Aorta (tissue), 5 donors: ENCODE measurements at regions of chr7 and their contacts with region 1.

Region 1: GRCh38 chr7:116525913-116526861 is 1.4 kb downstream of the CAV1 start:
- DNase-seq: peak; percentile 85 to 91
- ATAC-seq: peak; percentile 92
- H3K4me3 ChIP-seq: peak overlapping the region; percentile 21 to 84
- H3K27ac ChIP-seq: peak overlapping the region; percentile 87 to 90
- H3K4me1 ChIP-seq: no peaks in the 10 kb centered on the region
- H3K27me3 ChIP-seq: no peaks in the 10 kb centered on the region

Region 2: DNA sequence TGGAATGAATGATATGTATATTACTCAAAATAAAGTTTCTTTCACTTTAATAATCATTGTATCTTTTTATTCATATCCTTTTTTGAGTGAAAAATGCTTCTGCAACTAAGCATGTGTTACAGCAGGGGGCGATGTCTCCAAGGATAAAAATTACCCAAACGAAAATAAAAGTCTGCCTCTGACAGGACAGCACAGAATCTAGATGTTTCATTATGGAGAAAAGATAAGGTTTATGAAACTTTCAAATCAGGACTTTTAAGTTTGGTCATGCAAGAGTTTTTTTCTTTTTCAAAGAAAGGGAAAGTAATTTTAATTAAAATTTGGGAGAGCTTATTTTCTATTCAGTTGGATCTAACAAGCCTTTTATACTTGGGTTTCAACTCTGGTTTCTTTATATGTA is 267.5 kb before region 1 on chr7:
- intact Hi-C with region 1: loop called (anchors 2 kb)
- DNase-seq: no peak
- ATAC-seq: peak; percentile 80
- H3K4me3 ChIP-seq: no peak overlapping the region
- H3K27ac ChIP-seq: peak overlapping the region in 1 of 2 donors; percentile 22
- H3K4me1 ChIP-seq: peaks cover 0 to 2% of the 10 kb centered on the region in 2 donors
- H3K27me3 ChIP-seq: no peaks in the 10 kb centered on the region

Region 3: GRCh38 chr7:116354546-116355408 is 171.4 kb before region 1 on chr7:
- intact Hi-C with region 1: loop called (anchors 10 kb)
- DNase-seq: peak; percentile 62 to 81
- ATAC-seq: peak; percentile 82
- H3K4me3 ChIP-seq: peak overlapping the region in 1 of 2 donors; percentile 21
- H3K27ac ChIP-seq: peak overlapping the region; percentile 89 to 90
- H3K4me1 ChIP-seq: peaks cover 7 to 15% of the 10 kb centered on the region in 2 donors
- H3K27me3 ChIP-seq: no peaks in the 10 kb centered on the region

Region 4: DNA sequence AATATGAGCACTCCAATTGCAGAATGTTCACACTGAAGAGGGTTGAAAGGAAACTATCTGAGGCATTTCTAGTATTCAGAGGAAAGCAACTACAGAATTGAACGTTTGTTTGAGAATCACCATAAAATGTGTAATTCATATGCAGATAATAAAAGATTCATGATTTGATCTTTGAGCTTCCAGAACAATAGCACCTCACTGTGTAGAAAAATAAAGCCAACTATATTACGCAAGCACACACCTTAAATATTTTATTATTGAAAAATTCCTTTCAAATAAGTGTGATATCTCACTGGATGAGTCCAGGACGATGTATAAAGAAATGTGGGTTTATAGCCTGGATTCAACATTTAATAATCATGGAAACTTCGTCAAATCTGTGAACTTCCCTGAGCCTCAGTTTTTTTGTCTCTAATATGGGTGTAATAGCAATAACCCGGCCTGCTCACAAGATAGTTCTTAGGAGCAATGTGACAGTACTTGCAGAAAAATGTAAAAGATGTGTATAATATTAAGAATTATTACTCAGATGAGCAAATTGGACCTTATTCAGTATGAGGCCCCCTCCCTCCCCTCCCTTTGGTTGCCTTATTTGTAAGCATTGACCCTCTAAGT is 38.2 kb before region 1 on chr7:
- intact Hi-C with region 1: no loop called
- DNase-seq: no peak
- ATAC-seq: no peak
- H3K4me3 ChIP-seq: no peak overlapping the region
- H3K27ac ChIP-seq: no peak overlapping the region
- H3K4me1 ChIP-seq: no peaks in the 10 kb centered on the region
- H3K27me3 ChIP-seq: no peaks in the 10 kb centered on the region

Region 5: GRCh38 chr7:116499168-116500077 is 26.8 kb before region 1 on chr7 and contains the start of gene CAV2:
- intact Hi-C with region 1: loop called in 1 of 2 experiments (anchors 2 kb)
- DNase-seq: peak; percentile 81 to 93
- ATAC-seq: peak; percentile 91
- H3K4me3 ChIP-seq: peak within 1 kb of the TSS; percentile 60 to 80
- H3K27ac ChIP-seq: peak within 1 kb of the TSS; percentile 20 to 90
- H3K4me1 ChIP-seq: no peaks in the 10 kb centered on the region
- H3K27me3 ChIP-seq: no peaks in the 10 kb centered on the region
- total RNA-seq, gene CAV2: 86.7 to 131 TPM

Region 6: DNA sequence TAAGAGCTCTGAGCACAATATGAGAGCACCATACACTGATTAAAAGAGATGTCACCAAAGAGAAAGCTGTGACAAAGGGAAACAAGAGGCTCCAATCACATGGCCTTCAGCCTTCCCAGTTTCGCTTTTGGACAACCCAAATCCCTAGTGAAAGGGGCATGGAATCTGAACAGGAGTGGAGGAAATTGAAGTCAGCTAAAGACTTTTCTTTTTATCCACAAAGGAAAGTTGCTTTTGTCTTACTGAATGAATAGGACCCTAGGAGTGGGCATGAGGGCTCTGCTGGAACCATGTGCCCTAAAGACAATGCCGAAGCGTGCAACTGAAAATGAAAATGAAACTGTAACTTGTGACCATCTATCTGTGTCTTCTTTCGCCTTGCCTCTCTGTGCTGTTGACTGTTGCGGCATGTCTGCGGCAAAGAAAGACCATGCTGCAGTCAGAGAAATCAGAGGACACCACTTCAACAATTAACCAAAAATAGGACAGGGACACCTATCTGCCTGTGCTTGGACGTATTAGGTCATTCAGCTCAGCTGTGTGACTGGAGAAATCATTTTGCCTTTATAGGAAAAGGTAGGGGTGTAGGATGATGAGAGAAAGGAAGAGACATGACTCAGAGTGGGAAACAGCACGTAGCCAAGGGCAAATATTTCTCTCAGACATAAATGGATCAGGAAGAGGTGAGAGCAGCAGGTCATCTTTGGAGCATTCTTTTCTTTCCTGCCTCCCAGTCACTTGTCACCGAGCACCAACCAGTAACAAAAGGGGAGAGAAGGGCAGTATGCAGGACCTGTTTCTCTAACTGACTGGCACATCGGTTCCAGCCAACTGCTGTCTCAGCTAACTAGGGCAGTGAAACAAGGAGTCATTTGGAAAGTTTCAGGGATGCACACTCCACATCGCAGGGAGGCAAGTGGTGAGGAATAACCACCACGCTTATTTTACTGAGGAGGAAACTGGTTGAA is 14.4 kb before region 1 on chr7:
- intact Hi-C with region 1: no loop called
- DNase-seq: no peak
- ATAC-seq: peak; percentile 73
- H3K4me3 ChIP-seq: peak overlapping the region; percentile 37 to 38
- H3K27ac ChIP-seq: peak overlapping the region; percentile 38 to 42
- H3K4me1 ChIP-seq: peaks cover 0 to 8% of the 10 kb centered on the region in 2 donors
- H3K27me3 ChIP-seq: no peaks in the 10 kb centered on the region

Region 7: DNA sequence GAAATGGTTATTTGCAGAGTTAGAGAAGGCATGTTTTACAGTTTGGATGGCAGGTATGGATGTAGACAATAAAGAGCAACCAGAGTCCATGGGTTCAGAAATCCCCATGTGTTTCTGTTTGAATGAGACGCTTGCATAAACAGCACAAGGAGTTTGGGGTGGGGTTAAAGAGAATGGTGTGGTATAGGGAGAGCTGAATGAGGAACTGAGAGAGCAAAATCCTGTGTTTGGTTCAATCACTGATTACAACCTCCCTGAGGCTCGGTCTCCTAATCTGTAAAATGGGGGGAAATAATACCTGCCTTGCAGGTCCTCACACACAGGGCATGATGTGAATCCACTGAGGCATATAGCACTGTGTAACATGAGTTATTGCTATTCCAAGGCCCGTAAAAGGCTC is 22.3 kb after region 1 on chr7:
- intact Hi-C with region 1: no loop called
- DNase-seq: no peak
- ATAC-seq: no peak
- H3K4me3 ChIP-seq: no peak overlapping the region
- H3K27ac ChIP-seq: peak overlapping the region in 1 of 2 donors; percentile 18
- H3K4me1 ChIP-seq: peaks cover 2 to 4% of the 10 kb centered on the region in 2 donors
- H3K27me3 ChIP-seq: no peaks in the 10 kb centered on the region

Region 8: GRCh38 chr7:116588641-116589594 is 62.7 kb after region 1 on chr7:
- intact Hi-C with region 1: loop called (anchors 2 to 5 kb)
- DNase-seq: no peak
- ATAC-seq: peak; percentile 57
- H3K4me3 ChIP-seq: no peak overlapping the region
- H3K27ac ChIP-seq: no peak overlapping the region
- H3K4me1 ChIP-seq: peaks cover 0 to 1% of the 10 kb centered on the region in 2 donors
- H3K27me3 ChIP-seq: no peaks in the 10 kb centered on the region

Region 9: DNA sequence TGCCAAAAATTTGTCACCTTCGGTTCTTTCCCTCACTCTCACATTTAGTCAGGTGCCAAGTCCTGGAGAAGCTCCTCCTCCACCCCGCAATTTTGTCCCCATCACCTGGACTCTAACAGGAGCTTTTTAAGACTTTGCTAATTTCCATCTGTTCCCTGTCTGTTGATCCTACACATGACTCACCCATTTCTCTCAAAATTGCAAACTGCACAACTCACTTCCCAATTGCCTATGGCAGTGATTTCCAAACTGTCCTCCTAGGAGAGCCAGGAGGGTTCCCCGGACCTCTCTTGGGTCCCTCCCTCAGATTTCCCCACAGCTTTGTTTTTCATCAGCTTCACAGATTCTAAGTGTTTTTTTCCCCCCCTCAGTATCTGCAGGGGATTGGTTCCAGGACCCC is 676.3 kb after region 1 on chr7:
- intact Hi-C with region 1: no loop called
- DNase-seq: no peak
- ATAC-seq: no peak
- H3K4me3 ChIP-seq: no peak overlapping the region
- H3K27ac ChIP-seq: no peak overlapping the region
- H3K4me1 ChIP-seq: no peaks in the 10 kb centered on the region
- H3K27me3 ChIP-seq: no peaks in the 10 kb centered on the region